Activated CD8-positive, alpha-beta T cell treated with anti-CD3 and anti-CD28 coated beads for 36 hours (primary cell): ENCODE measurements at regions of chr7 and their contacts with region 1.

Region 1: DNA sequence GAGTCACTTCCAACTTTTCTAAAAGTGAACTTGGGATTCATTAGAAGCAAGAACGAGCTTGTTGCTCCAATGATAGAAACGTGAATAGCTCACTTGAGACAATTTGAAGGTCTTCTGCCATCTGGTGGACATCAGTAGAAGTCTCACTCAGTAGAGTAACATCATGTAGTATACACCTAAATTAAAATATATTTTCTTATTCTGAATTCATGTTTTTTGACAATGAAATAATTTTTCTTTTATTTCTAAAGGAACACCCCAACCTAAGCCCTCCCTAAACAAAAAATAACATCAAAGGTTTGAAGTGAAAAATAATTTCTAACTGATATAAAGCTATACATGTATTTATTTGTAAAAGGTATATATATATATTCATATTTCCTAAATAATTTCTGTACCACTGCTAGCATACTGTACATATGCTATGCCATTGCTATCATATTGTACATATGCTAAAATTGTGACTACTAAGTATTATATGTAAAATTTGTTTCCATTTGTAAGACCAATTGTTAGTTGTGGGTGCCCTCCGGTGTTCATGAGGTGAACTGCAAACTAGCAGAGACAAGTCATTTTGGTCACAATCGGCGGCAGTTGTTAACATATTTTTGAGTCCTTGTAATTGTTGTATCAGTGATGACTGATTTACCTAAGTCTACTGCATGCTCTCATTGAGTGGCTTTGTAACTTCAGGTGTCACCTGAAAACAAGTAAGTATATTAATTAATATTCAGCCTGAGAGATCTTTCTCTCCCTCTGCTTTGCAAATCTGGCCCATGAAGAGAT is 121.9 kb downstream of the PTPRZ1 start:
- DNase-seq: peak; percentile 67
- ATAC-seq: peak; percentile 74
- H3K4me3 Mint-ChIP-seq: no peak overlapping the region
- H3K27ac Mint-ChIP-seq: no peak overlapping the region
- H3K4me1 Mint-ChIP-seq: no peaks in the 10 kb centered on the region
- H3K27me3 Mint-ChIP-seq: no peaks in the 10 kb centered on the region
- CTCF ChIP-seq: peak; percentile 86

Region 2: DNA sequence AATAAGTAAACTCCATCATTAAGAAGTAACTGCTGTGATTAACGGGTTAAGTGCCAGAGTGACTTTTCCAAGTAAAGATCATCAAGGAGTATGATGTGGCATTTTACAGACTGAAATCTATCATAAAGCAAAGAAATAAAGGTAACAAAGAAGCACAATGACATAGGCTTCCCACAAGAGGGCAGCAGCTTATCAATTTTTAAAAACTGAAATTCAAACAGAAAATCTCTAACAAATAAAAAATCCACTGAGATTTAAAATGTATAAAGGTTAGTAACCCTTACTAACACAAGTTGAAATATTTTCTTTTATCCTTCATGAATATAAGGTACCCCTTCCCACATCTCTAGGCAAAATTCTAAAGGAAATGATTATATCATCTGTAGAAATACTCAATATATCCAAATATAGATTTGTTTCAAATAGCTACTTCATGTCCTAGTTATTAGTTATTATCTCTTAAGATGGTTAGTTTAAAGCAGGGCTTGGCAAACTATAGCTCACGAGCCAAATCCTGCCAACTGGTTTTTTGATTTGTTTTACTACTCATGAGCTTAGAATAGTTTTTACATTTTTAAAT is 627.9 kb before region 1 on chr7:
- CTCF ChIA-PET with region 1: interaction called, 17 read pairs
- POLR2A ChIA-PET with region 1: no interaction called
- intact Hi-C with region 1: no loop called
- DNase-seq: peak; percentile 33
- ATAC-seq: peak; percentile 45
- H3K4me3 Mint-ChIP-seq: no peak overlapping the region
- H3K27ac Mint-ChIP-seq: no peak overlapping the region
- H3K4me1 Mint-ChIP-seq: peaks cover 24% of the 10 kb centered on the region
- H3K27me3 Mint-ChIP-seq: no peaks in the 10 kb centered on the region
- CTCF ChIP-seq: peak; percentile 84

Region 3: DNA sequence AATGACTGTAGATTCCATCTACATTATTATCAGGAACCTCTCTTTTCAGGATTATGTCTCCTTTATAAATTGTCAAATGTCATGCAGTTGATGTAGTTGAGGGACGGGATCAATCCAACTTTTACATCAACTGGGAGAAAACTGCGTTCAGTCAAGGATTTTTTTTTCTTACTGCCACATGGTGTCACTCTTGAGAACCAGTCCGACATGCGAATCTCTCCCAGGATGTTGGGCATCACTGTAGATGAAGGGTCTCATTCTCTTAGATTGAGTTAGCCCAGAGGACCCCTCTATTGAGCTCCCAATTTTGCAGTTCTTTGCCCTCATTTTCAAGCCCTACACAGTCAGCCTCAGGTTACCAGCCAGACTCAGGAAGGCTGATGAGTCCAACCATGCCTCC is 242.1 kb before region 1 on chr7:
- CTCF ChIA-PET with region 1: interaction called, 4 read pairs
- POLR2A ChIA-PET with region 1: no interaction called
- intact Hi-C with region 1: loop called (anchors 10 kb)
- DNase-seq: no peak
- ATAC-seq: no peak
- H3K4me3 Mint-ChIP-seq: no peak overlapping the region
- H3K27ac Mint-ChIP-seq: no peak overlapping the region
- H3K4me1 Mint-ChIP-seq: no peaks in the 10 kb centered on the region
- H3K27me3 Mint-ChIP-seq: no peaks in the 10 kb centered on the region
- CTCF ChIP-seq: no peak

Region 4: GRCh38 chr7:121966276-121966934 is 28.4 kb before region 1 on chr7:
- CTCF ChIA-PET with region 1: interaction called, 11 read pairs
- POLR2A ChIA-PET with region 1: no interaction called
- intact Hi-C with region 1: no loop called
- DNase-seq: no peak
- ATAC-seq: no peak
- H3K4me3 Mint-ChIP-seq: no peak overlapping the region
- H3K27ac Mint-ChIP-seq: no peak overlapping the region
- H3K4me1 Mint-ChIP-seq: no peaks in the 10 kb centered on the region
- H3K27me3 Mint-ChIP-seq: no peaks in the 10 kb centered on the region
- CTCF ChIP-seq: no peak